Activated T-helper 1 cell treated with anti-CD3 and anti-CD28 coated beads, Interleukin-12 subunit alpha, Interleukin-12 subunit beta, Interleukin-2, Interleukin-4 antibody, amounts not matched to agents 30 ng/mL and 10 ng/mL and 1 ng/mL, durations not matched to agents 14 hours and 24 hours and 36 hours (primary cell): ENCODE measurements at regions of chr16 and their contacts with region 1.

Region 1: DNA sequence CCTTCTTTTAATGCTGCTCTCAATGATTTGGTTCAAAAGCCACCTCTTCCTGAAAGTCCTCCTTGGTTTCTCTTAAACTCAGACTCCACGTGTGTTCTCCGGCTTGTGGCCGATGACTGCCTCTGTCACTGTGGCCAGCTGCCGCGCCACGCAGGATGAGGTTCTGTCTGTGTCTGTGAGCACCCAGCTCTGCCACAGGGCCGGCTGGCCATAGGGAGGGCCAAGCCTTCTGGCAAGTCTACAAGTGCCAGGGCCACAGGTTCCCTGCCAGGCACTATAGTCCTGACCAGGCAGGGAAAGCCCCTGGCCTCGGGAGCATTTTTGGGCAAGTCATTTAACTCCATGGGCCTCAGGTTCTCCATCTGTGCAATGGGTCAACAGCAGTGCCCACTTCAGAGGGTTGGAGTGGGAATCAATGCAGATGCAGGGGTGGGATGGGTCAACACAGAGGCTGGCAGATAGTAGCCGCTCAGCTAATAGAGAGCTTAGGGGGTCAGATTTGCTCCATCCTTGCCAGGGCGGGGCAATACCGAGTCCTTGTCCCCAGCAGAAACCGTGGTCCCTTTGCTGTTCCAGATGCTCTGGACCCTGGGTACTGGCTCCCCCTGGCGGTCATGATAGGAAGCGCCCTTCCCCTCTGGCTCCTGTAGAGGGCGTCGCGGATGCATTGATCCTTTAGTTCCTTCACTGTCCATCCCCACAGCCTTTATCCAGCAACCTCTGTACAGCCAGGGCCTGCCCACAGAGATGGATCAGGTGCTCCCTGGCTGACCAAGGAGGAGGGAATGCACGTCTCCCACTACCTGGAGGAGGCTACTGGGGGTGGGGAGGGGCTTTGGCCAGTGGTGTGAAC is 19.3 kb upstream of the ADGRG3 start:
- DNase-seq: peak; percentile 81
- H3K4me3 Mint-ChIP-seq: no peak overlapping the region
- H3K27ac Mint-ChIP-seq: peak overlapping the region; percentile 45
- H3K4me1 Mint-ChIP-seq: peaks cover 34% of the 10 kb centered on the region
- H3K27me3 Mint-ChIP-seq: no peaks in the 10 kb centered on the region

Region 2: DNA sequence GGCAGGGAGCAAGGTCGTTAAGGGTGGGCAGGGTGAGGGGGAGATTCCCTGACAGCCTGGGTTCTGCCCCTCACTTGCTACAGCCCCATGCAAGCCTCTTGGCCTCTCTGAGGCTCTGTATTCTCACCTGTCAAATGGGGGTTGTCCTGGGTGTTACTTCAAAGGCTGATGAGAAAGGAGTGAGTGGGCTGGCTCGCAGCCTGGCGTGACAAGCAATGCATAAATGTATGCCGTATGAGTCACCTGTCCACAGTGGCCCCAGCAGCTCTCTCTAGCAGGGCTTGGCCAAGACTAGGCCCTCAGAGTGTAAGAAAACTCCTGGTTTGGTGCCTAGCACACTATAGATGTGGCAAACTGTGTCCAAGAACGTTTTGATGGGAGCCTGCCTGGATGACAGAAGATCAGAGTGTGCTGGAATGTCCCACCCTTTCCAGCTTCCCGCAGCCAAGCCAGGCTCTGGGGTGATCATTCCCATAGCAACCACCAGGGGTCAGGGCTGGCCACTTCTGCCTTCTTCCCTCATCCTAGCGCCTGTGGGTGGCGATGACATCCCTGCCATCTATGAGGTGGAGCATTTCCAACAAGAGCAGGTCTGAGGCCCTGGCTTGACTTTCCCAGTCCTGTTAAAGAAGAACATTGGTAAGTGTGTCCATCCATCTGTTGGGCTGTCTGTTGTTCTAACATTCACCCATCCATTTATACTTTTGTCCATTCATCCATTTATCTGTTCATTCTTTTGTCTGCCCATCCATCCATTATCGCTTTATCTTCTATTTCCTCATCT is 57.5 kb before region 1 on chr16:
- intact Hi-C with region 1: loop called (anchors 1 kb)
- DNase-seq: peak; percentile 56
- H3K4me3 Mint-ChIP-seq: peak overlapping the region; percentile 63
- H3K27ac Mint-ChIP-seq: peak overlapping the region; percentile 85
- H3K4me1 Mint-ChIP-seq: peaks cover 55% of the 10 kb centered on the region
- H3K27me3 Mint-ChIP-seq: peaks cover 2% of the 10 kb centered on the region

Region 3: DNA sequence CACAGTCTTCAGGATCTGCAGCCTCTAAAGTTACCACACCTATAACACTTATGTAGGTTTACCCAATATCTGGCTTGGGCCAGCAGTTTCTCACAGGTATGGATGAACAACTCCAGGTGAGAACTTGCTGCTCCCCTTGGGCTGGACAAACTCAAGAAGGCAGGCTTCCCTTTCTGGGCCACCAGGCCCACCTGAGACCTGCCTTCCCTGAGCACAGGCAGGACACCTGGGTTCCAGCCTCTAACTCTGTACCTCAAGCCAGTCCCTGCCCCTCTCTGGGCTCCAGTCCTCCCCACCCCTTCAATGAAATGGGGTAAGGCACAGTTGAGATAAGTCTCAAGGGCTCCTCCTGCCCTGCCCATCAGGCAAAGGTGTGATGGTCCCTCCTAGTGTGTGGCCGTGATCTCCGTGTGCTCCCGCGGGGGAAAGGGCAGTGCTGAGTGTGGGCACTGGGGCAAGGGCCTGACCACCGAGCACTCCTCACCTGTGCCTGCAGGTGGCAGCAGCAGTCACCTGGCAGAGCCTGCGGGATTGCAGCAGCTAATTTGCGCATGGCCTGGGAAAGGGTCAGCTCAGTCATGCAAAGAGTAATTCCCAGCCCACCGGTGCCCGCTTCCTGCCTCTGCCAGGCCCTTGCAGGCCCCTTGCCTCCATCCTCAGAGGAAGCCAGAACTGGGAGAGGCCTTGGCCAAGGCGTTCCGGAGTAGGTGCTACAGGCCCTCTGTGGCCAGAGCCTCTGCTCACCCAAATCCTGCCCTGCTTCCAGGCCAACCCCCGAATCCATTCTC is 48.6 kb before region 1 on chr16:
- intact Hi-C with region 1: loop called (anchors 1 kb)
- DNase-seq: no peak
- H3K4me3 Mint-ChIP-seq: no peak overlapping the region
- H3K27ac Mint-ChIP-seq: peak overlapping the region; percentile 24
- H3K4me1 Mint-ChIP-seq: peaks cover 62% of the 10 kb centered on the region
- H3K27me3 Mint-ChIP-seq: no peaks in the 10 kb centered on the region

Region 4: GRCh38 chr16:57609541-57610401 is 39.0 kb before region 1 on chr16:
- intact Hi-C with region 1: loop called (anchors 1 kb)
- DNase-seq: peak; percentile 74
- H3K4me3 Mint-ChIP-seq: peak overlapping the region; percentile 69
- H3K27ac Mint-ChIP-seq: peak overlapping the region; percentile 99
- H3K4me1 Mint-ChIP-seq: peaks cover 68% of the 10 kb centered on the region
- H3K27me3 Mint-ChIP-seq: no peaks in the 10 kb centered on the region

Region 5: GRCh38 chr16:57628008-57628781 is 20.6 kb before region 1 on chr16 and contains the start of gene ADGRG1:
- intact Hi-C with region 1: loop called (anchors 2 kb)
- DNase-seq: peak; percentile 22
- H3K4me3 Mint-ChIP-seq: peak within 1 kb of the TSS; percentile 78
- H3K27ac Mint-ChIP-seq: peak within 1 kb of the TSS; percentile 29
- H3K4me1 Mint-ChIP-seq: peaks cover 20% of the 10 kb centered on the region
- H3K27me3 Mint-ChIP-seq: peaks cover 19% of the 10 kb centered on the region
- total RNA-seq, gene ADGRG1: 6.4 and 7.7 TPM in 2 replicates

Region 6: GRCh38 chr16:57720142-57720575 is 71.3 kb after region 1 on chr16:
- intact Hi-C with region 1: loop called (anchors 1 kb)
- DNase-seq: peak; percentile 33
- H3K4me3 Mint-ChIP-seq: no peak overlapping the region
- H3K27ac Mint-ChIP-seq: no peak overlapping the region
- H3K4me1 Mint-ChIP-seq: no peaks in the 10 kb centered on the region
- H3K27me3 Mint-ChIP-seq: peaks cover 13% of the 10 kb centered on the region

Region 7: DNA sequence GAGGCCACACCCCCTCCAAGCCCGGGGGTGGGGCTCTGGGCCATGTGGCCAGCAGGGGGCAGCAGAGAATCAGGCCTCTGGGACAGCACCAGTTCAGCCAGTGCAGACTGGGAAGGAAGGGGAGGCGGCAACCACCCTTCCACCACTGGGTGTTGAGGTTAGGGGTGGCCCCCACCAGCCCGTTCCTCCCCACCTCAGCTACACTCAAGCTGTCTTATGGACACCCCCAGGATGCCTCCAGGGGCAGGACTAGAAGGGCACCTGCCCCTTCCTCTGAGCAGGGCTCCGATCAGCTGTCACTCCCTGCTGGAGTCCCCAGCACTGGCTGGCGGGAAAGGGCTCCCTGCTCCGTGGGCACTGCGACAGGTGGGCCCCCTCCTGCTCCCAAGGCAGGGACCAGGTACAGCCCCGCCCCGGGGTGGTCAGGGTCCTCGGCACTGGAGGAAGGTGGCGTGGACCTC is 108.5 kb after region 1 on chr16:
- intact Hi-C with region 1: loop called (anchors 1 kb)
- DNase-seq: peak; percentile 81
- H3K4me3 Mint-ChIP-seq: no peak overlapping the region
- H3K27ac Mint-ChIP-seq: no peak overlapping the region
- H3K4me1 Mint-ChIP-seq: no peaks in the 10 kb centered on the region
- H3K27me3 Mint-ChIP-seq: no peaks in the 10 kb centered on the region

Region 8: DNA sequence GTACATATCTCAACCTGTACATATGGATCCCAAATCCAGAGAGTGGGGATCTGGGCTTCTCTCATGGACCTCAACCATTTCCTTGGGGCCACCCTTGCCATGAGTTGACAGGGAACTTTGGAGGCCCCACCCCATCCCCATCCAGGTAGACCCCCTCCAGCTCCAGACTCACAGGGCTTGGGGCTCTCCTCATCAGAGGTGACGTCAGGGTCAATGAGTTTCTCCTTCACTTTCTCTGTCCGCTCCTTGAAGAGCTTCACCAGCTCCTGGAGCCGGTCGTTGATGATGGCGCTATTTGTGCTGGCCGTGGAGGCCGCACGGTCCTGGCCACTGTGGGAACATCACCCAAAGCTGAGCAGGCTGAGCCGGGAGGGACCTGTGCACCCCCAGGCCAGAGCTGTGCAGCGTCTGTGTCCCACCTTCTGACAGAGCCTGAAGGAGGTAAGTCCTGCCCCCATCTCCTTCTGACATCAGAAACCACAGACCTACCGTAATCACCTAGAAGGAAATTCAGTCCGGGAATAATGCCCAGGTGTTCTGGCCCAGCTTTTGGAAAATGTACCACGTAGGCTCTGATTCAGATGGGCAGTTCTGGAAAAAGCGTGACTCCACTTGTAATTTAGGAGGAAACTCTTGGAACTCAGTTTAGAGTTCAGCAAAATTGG is 271.5 kb after region 1 on chr16:
- intact Hi-C with region 1: no loop called
- DNase-seq: no peak
- H3K4me3 Mint-ChIP-seq: no peak overlapping the region
- H3K27ac Mint-ChIP-seq: no peak overlapping the region
- H3K4me1 Mint-ChIP-seq: no peaks in the 10 kb centered on the region
- H3K27me3 Mint-ChIP-seq: peaks cover 2% of the 10 kb centered on the region